Activated CD4-positive, alpha-beta memory T cell treated with anti-CD3 and anti-CD28 coated beads for 36 hours (primary cell): ENCODE measurements at regions of chr2 and their contacts with region 1.

Region 1: GRCh38 chr2:134169788-134170187 is 84.1 kb upstream of the MGAT5 start:
- DNase-seq: peak; percentile 59
- H3K4me3 Mint-ChIP-seq: no peak overlapping the region
- H3K27ac Mint-ChIP-seq: peak overlapping the region; percentile 68
- H3K4me1 Mint-ChIP-seq: peaks cover 84% of the 10 kb centered on the region
- H3K27me3 Mint-ChIP-seq: no peaks in the 10 kb centered on the region

Region 2: GRCh38 chr2:134218930-134219658 is 49.3 kb after region 1 on chr2:
- CTCF ChIA-PET with region 1: interaction called, 6 read pairs
- POLR2A ChIA-PET with region 1: interaction called, 7 read pairs
- intact Hi-C with region 1: loop called (anchors 1 kb)
- DNase-seq: peak; percentile 56
- H3K4me3 Mint-ChIP-seq: peak overlapping the region; percentile 49
- H3K27ac Mint-ChIP-seq: peak overlapping the region; percentile 74
- H3K4me1 Mint-ChIP-seq: peaks cover 67% of the 10 kb centered on the region
- H3K27me3 Mint-ChIP-seq: no peaks in the 10 kb centered on the region

Region 3: DNA sequence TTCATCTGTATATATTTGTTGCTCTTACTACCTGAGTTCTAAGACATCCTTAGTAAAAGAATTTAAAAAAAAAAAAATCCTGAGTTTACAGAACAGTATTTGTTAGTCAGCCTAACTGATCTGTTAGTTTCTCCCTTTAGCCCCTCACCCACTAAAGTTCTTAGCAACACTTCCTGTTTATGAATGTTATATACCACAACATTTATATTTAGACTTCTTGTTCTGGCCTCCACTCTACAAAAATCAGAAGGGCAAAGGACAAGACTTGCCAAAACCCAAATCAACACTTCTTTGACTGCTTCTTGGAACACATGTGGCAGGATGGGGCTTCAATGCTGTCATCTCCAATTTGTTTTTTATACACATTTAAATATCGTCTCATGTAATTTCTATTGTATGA is 155.2 kb after region 1 on chr2:
- CTCF ChIA-PET with region 1: no interaction called
- POLR2A ChIA-PET with region 1: no interaction called
- intact Hi-C with region 1: no loop called
- DNase-seq: no peak
- H3K4me3 Mint-ChIP-seq: no peak overlapping the region
- H3K27ac Mint-ChIP-seq: no peak overlapping the region
- H3K4me1 Mint-ChIP-seq: peaks cover 30% of the 10 kb centered on the region
- H3K27me3 Mint-ChIP-seq: no peaks in the 10 kb centered on the region